Gastrocnemius medialis (tissue), 4 donors: ENCODE measurements at regions of chr6 and their contacts with region 1.

Region 1: GRCh38 chr6:13336553-13336952 is 8.2 kb upstream of the TBC1D7 start:
- DNase-seq: peak; percentile 44 to 68
- ATAC-seq: peak; percentile 74 to 91
- H3K4me3 ChIP-seq: no peak overlapping the region
- H3K27ac ChIP-seq: peak overlapping the region in 1 of 4 donors; percentile 13
- H3K4me1 ChIP-seq: no peaks in the 10 kb centered on the region
- H3K27me3 ChIP-seq: no peaks in the 10 kb centered on the region
- CTCF ChIP-seq: peak; percentile 62 to 95 (median 88)
- POLR2A ChIP-seq: no peak

Region 2: GRCh38 chr6:12911387-12911960 is 425.1 kb before region 1 on chr6:
- in situ Hi-C with region 1: loop called in 2 of 4 experiments (anchors 10 to 25 kb)
- intact Hi-C with region 1: loop called (anchors 2 kb)
- DNase-seq: no peak
- ATAC-seq: no peak
- H3K4me3 ChIP-seq: no peak overlapping the region
- H3K27ac ChIP-seq: no peak overlapping the region
- H3K4me1 ChIP-seq: no peaks in the 10 kb centered on the region
- H3K27me3 ChIP-seq: no peaks in the 10 kb centered on the region
- CTCF ChIP-seq: peak in 2 of 5 experiments; percentile 19 to 34
- POLR2A ChIP-seq: no peak

Region 3: DNA sequence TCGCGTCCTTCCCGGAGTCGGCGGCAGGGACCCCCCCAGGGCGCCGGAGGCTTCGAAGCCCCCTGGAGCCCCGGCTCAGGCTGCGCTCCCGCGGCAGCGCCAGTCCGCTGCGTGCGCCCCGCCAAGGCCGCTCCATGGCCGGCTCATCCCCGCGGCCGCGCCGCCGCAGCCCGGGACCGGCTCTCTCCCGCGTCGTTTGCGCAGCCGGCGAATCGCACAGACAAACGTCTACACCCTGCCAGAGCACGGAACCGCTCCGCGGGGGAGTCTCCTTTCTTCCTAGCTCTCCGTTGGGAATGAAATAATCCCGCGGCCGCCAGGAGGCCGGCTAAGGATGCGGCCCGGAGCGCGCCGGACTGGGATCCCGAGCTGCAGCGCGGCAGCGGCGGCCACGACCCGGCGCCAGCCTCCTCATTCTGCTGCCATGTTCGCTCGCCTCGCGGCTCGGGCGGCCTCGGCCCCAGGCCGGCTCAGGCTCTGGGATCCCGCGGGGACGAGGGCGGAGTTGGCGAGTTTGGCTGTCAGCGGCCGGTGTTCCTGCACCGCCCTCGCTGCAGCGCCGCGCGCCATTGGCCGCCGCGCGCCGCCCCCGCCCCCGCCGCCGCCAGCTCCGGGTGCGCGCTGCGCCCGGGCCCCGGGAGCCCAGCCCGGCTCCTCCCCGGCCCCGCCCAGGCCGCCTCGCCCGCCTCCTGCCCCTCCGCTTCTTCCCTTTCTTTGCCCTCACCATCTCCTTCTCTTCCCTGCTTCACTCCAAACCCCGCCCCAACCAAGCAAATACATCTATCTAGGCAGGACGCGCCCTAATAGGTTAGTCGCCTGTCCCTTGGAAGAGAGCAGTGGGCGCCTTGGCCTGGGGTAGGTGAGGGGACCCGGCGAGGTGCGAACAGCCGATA is 150.8 kb after region 1 on chr6 and contains the start of gene GFOD1:
- in situ Hi-C with region 1: no loop called
- intact Hi-C with region 1: loop called (anchors 5 kb)
- DNase-seq: peak; percentile 82 to 83
- ATAC-seq: peak; percentile 75 to 84
- H3K4me3 ChIP-seq: peak within 1 kb of the TSS; percentile 80 to 96 (median 89)
- H3K27ac ChIP-seq: peak within 1 kb of the TSS; percentile 87 to 98 (median 94)
- H3K4me1 ChIP-seq: peaks cover 26 to 35% of the 10 kb centered on the region in 2 donors
- H3K27me3 ChIP-seq: no peaks in the 10 kb centered on the region
- CTCF ChIP-seq: peak in 4 of 5 experiments; percentile 20 to 29 (median 24)
- POLR2A ChIP-seq: peak; percentile 91 to 97
- total RNA-seq, gene GFOD1: 9.0 to 31.8 (median 16.9) TPM

Region 4: GRCh38 chr6:13531945-13532344 is 195.4 kb after region 1 on chr6:
- in situ Hi-C with region 1: loop called in 3 of 4 experiments (anchors 5 to 10 kb)
- intact Hi-C with region 1: no loop called
- DNase-seq: no peak
- ATAC-seq: no peak
- H3K4me3 ChIP-seq: no peak overlapping the region
- H3K27ac ChIP-seq: no peak overlapping the region
- H3K4me1 ChIP-seq: peaks cover 6 to 14% of the 10 kb centered on the region in 2 donors
- H3K27me3 ChIP-seq: no peaks in the 10 kb centered on the region
- CTCF ChIP-seq: no peak
- POLR2A ChIP-seq: no peak

Region 5: DNA sequence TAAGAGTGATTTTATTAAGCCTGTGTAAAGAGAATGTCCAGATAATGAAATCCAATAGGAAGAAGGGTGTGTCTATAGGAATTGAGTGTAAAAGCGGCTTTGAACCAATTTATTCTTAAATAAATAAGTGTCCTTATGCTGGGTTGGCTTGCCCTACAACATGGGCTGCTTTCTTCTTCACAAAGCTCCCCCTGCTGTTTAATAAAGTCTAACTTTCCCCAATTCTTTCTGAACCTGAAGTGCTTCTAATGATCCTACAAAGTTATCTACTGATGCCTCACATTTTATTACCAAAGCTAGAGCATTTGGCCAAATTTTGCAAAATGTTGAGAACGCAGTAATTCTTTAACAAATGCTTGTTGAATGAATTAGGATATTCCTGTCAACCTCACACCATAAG is 201.5 kb after region 1 on chr6:
- in situ Hi-C with region 1: loop called (anchors 5 to 10 kb)
- intact Hi-C with region 1: loop called (anchors 1 kb)
- DNase-seq: no peak
- ATAC-seq: peak; percentile 85 to 86
- H3K4me3 ChIP-seq: no peak overlapping the region
- H3K27ac ChIP-seq: peak overlapping the region in 2 of 4 donors; percentile 14 to 17
- H3K4me1 ChIP-seq: peaks cover 0 to 3% of the 10 kb centered on the region in 2 donors
- H3K27me3 ChIP-seq: no peaks in the 10 kb centered on the region
- CTCF ChIP-seq: peak; percentile 56 to 68 (median 61)
- POLR2A ChIP-seq: no peak

Region 6: DNA sequence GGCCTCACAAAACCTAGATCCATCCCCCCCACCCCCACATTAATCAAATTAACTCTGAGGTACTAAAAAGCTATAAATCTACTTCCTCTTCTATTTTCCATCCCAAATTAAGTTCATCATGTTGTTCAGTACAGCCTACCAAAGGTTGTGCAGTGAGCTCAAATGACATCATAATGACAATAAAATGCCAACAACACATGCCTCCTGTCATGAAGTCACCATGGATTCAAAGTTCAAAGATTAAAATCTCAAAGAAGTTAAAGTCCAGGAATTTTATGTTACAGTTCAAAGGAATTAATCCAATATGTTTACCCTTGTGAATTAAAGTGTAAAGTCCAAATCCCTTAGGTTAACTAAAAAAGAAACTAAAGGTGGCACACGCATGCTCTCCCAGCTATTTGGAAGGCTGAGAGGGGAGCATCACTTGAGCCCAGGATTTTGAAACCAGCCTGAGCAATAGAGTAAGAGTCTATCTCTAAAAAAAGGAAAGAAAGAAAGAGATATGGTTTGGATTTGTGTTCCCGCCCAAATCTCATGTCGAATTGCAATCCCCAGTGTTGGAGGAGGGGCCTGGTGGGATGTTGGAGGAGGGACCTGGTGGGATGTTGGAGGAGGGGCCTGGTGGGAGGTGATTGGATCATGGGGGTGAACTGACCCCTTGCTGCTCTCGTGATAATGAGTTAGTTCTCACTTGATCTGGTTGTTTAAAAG is 212.1 kb after region 1 on chr6:
- in situ Hi-C with region 1: loop called in 1 of 4 experiments (anchors 10 kb)
- intact Hi-C with region 1: no loop called
- DNase-seq: no peak
- ATAC-seq: no peak
- H3K4me3 ChIP-seq: no peak overlapping the region
- H3K27ac ChIP-seq: no peak overlapping the region
- H3K4me1 ChIP-seq: no peaks in the 10 kb centered on the region
- H3K27me3 ChIP-seq: no peaks in the 10 kb centered on the region
- CTCF ChIP-seq: no peak
- POLR2A ChIP-seq: no peak

Region 7: DNA sequence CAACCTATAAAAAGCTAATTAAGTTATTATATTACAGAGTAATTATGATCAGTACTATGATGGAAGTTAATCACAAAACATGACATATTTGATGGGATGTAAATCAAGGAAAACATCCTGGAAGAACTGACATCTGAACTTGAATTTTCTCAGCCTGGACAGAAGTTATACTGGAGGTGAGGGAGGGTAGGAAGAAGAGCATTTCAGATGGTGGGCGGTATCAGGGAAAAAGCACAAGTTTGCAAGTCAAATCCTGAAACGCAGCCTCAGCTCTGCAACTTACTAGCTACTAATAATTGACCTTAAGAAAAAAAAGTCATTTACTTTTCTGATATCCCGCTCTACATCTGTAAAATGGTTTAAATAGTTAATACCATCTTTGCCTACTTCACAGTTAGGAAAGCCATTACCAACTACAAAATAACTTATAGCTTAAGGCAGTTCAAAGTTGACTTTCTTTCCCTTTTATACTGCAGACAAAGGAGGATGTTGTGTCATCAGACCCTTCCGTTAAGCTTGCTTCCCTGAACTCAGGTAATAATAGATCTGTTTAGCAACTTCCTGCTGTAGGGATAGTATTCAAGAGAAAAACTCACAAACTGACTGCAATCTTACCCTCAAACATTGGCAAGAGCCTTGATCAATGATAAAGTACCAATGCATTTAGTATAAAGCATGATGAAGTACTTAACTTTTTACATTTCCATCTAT is 299.6 kb after region 1 on chr6:
- in situ Hi-C with region 1: no loop called
- intact Hi-C with region 1: no loop called
- DNase-seq: no peak
- ATAC-seq: no peak
- H3K4me3 ChIP-seq: no peak overlapping the region
- H3K27ac ChIP-seq: no peak overlapping the region
- H3K4me1 ChIP-seq: no peaks in the 10 kb centered on the region
- H3K27me3 ChIP-seq: no peaks in the 10 kb centered on the region
- CTCF ChIP-seq: no peak
- POLR2A ChIP-seq: no peak

Region 8: GRCh38 chr6:14066782-14067406 is 730.3 kb after region 1 on chr6:
- in situ Hi-C with region 1: loop called in 1 of 4 experiments (anchors 25 kb)
- intact Hi-C with region 1: loop called (anchors 5 kb)
- DNase-seq: no peak
- ATAC-seq: peak; percentile 56 to 78
- H3K4me3 ChIP-seq: no peak overlapping the region
- H3K27ac ChIP-seq: no peak overlapping the region
- H3K4me1 ChIP-seq: no peaks in the 10 kb centered on the region
- H3K27me3 ChIP-seq: peaks cover 0 to 10% (median 4%) of the 10 kb centered on the region in 3 donors
- CTCF ChIP-seq: peak; percentile 54 to 70 (median 62)
- POLR2A ChIP-seq: no peak